ENCODE measurements at regions of chr21 and their contacts with region 1.

Region 1: GRCh38 chr21:33199516-33200217 is 30.1 kb upstream of the IFNAR2 start:
- DNase-seq: peak in 6 of 10 donors; percentile 57 to 86 (median 78)

Region 2: GRCh38 chr21:32940079-32941014 is 259.3 kb before region 1 on chr21:
- intact Hi-C with region 1: loop called (anchors 10 kb)
- DNase-seq: peak in 3 of 10 donors; percentile 42 to 64 (median 46)

Region 3: GRCh38 chr21:33127154-33127893 is 72.3 kb before region 1 on chr21:
- intact Hi-C with region 1: loop called (anchors 5 kb)
- DNase-seq: peak; percentile 42 to 97 (median 84)

Region 4: GRCh38 chr21:33261635-33262034 is 62.0 kb after region 1 on chr21:
- intact Hi-C with region 1: no loop called
- DNase-seq: no peak

Region 5: DNA sequence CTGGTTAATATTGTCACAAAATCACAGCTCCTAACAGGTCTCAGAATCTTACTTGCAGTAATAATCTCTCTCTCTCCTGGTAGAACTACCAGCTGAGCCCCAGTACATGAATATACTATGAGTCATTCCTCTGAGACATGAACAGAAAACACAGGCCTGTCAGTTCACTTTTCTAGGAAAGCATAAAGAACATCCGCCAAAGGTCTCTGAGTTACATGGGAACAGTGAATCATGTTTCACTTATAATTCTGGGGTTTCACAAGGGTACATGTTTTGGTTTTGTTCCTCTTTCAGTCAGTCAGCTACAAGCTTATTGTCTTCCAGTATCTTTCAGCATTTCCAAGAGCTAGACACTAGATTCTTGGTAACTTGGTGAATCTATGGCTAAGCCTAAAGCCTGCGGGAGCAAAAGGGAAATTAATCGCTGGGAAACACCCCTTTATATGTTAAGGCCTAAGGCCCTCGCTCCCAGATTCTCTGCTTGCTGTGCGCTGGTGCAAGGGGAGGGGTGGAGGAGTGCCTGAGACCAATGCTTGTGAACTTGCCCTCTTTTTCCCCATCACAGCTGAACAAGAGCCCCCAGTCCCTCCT is 235.2 kb after region 1 on chr21:
- intact Hi-C with region 1: loop called (anchors 5 kb)
- DNase-seq: no peak

Measured in posterior cingulate gyrus (tissue), 11 donors.